IMR-90 (cell line): ENCODE measurements at regions of chr5 and their contacts with region 1.

Region 1: DNA sequence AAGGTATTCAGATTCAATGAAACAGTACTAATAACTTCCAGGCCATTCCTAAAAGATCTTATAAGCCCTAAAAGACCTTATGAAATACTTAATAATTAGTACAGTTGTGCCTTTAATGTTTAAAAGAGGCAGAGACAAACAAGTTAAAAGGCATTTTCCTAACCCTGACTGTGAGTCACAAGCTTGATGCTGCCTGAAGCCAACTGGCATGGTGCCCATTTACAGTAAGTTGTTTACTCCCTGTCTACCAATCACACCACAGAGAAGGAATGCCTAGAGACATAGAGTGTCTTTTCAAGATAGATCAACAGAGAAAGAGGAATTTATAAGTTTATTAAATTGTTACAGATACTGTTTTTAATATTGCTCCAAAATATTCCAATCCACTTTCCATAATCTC is 47.8 kb downstream of the NR3C1 start:
- DNase-seq: peak; percentile 96
- ATAC-seq: peak; percentile 83
- H3K4me3 ChIP-seq: no peak overlapping the region
- H3K27ac ChIP-seq: no peak overlapping the region
- H3K4me1 ChIP-seq: peaks cover 2% of the 10 kb centered on the region
- H3K27me3 ChIP-seq: no peaks in the 10 kb centered on the region
- CTCF ChIP-seq: no peak
- POLR2A ChIP-seq: no peak
- RAD21 ChIP-seq: no peak

Region 2: DNA sequence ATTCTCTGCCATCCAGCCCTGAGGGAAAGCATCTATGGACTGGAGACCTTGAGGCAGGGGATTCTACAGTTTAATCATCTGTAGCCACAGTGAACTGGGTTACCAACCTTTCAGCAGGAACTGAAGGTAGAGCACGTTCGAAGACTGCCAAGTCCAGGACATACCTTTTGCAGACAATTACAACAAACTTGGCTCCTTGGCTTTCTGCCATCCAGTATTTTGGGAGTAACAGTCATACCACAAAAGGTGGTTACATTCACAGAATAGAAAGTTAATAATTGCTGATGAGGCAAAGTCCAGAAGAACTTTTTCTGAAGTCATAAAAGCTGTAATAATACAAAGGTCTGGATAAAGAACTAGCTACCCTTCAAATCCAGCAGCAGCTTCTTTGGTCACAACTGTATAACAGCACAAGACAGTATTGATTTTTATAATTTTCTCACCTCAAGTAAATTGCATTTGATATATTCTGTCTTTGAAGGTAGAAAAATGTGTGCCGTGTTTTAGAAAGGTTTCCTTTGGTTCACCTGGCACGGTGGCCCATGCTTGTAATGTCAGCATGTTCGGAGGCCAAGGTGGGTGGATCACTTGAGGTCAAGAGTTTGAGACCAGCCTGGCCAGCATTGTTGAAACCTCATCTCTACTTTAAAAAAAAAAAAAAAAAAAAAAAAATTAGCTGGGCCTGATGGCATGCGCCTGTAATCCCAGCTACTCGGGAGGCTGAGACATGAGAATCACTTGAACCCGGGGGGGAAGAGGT is 188.9 kb before region 1 on chr5:
- CTCF ChIA-PET with region 1: no interaction called
- POLR2A ChIA-PET with region 1: no interaction called
- dilution Hi-C with region 1: no loop called
- in situ Hi-C with region 1: no loop called
- intact Hi-C with region 1: no loop called
- DNase-seq: no peak
- ATAC-seq: no peak
- H3K4me3 ChIP-seq: no peak overlapping the region
- H3K27ac ChIP-seq: no peak overlapping the region
- H3K4me1 ChIP-seq: peaks cover 4% of the 10 kb centered on the region
- H3K27me3 ChIP-seq: no peaks in the 10 kb centered on the region
- CTCF ChIP-seq: no peak
- POLR2A ChIP-seq: no peak
- RAD21 ChIP-seq: no peak

Region 3: GRCh38 chr5:143341807-143342570 is 13.7 kb before region 1 on chr5:
- CTCF ChIA-PET with region 1: no interaction called
- POLR2A ChIA-PET with region 1: no interaction called
- dilution Hi-C with region 1: no loop called
- in situ Hi-C with region 1: no loop called
- intact Hi-C with region 1: loop called (anchors 2 kb)
- DNase-seq: peak; percentile 84
- ATAC-seq: no peak
- H3K4me3 ChIP-seq: no peak overlapping the region
- H3K27ac ChIP-seq: no peak overlapping the region
- H3K4me1 ChIP-seq: peaks cover 8% of the 10 kb centered on the region
- H3K27me3 ChIP-seq: no peaks in the 10 kb centered on the region
- CTCF ChIP-seq: no peak
- POLR2A ChIP-seq: no peak
- RAD21 ChIP-seq: no peak

Region 4: DNA sequence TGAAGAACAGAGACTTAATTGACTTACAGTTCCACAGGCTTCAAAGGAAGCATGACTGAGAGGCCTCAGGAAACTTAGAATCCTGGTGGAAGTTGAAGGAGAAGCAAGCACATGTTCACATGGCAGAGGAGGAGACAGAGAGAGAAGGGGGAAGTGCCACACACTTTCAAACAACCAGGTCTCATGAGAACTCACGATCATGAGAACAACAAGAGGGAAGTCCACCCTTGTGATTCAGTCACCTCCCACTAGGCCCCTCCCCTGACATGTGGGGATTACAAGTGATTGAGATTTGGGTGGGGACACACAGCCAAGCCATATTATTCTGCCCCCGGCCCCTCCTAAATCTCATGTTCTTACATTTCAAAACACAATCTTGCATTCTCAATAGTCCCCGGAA is 28.3 kb after region 1 on chr5:
- CTCF ChIA-PET with region 1: no interaction called
- POLR2A ChIA-PET with region 1: no interaction called
- dilution Hi-C with region 1: no loop called
- in situ Hi-C with region 1: no loop called
- intact Hi-C with region 1: no loop called
- DNase-seq: no peak
- ATAC-seq: no peak
- H3K4me3 ChIP-seq: no peak overlapping the region
- H3K27ac ChIP-seq: no peak overlapping the region
- H3K4me1 ChIP-seq: no peaks in the 10 kb centered on the region; the same call in 1 of the 2 replicates
- H3K27me3 ChIP-seq: no peaks in the 10 kb centered on the region
- CTCF ChIP-seq: no peak
- POLR2A ChIP-seq: no peak
- RAD21 ChIP-seq: no peak

Region 5: DNA sequence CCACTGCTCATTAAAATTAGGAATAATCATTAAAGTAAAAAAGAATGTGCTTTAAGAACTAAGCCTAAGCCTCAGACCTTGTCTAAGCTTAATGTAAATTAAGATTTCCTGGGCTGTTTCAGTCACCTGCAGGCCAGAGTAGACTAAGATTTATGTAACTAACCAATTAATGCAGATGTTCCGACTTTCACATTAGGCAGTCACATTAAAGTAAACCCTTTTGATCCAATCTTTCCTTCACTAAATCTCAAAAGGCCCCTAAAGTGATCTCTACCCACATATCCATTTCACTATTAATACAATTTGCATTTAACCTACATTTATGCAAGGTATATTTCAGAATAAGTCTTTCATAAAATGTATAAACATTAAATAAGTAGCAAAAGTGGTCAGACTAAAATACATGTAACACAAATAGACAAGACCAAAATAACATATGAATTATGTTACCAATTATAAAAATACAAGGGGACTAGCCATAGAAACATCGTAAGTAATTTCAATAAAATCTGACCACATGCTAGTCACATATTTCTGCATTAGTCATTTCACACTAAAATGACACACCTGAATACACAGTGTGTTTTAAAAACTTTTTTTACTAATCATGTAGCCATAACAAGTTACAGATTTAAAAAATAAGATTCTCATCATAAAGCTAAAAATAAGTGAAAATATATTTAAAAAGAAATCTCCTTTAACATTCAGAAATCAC is 40.1 kb after region 1 on chr5:
- CTCF ChIA-PET with region 1: interaction called, 3 read pairs
- POLR2A ChIA-PET with region 1: no interaction called
- dilution Hi-C with region 1: no loop called
- in situ Hi-C with region 1: no loop called
- intact Hi-C with region 1: loop called (anchors 5 kb)
- DNase-seq: no peak
- ATAC-seq: no peak
- H3K4me3 ChIP-seq: no peak overlapping the region; the same call in 1 of the 2 replicates
- H3K27ac ChIP-seq: no peak overlapping the region
- H3K4me1 ChIP-seq: peaks cover 6% of the 10 kb centered on the region
- H3K27me3 ChIP-seq: no peaks in the 10 kb centered on the region
- CTCF ChIP-seq: no peak
- POLR2A ChIP-seq: no peak
- RAD21 ChIP-seq: no peak